Pancreas (tissue), 10 donors: ENCODE measurements at regions of chr16 and their contacts with region 1.

Region 1: GRCh38 chr16:8567750-8568617 is 22.3 kb downstream of the TMEM114 start:
- DNase-seq: peak; percentile 69 to 85 (median 74)
- ATAC-seq: peak; percentile 83 to 96 (median 94)
- H3K4me3 ChIP-seq: no peak overlapping the region
- H3K27ac ChIP-seq: no peak overlapping the region
- H3K4me1 ChIP-seq: no peaks in the 10 kb centered on the region
- H3K27me3 ChIP-seq: no peaks in the 10 kb centered on the region
- CTCF ChIP-seq: peak; percentile 95 to 99 (median 96)

Region 2: DNA sequence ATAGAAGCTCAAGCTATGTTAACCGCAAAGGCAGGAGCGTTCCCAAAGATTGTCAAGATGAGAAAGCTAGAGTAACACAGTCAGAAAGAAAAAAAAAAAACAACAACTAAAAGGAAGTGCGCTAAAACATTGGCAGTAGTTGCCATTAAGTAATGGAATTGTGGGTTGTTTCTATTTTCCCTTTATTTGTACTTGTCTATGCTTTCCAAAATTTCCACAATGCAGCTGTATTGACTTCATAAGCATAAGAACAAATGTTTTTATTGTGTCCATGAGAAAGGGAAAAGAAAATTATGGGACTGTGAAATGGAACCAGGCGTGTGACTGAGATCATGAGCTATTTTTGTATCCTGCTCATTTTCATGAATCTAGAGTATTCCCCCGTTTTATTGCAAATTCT is 131.1 kb before region 1 on chr16:
- intact Hi-C with region 1: no loop called
- DNase-seq: no peak
- ATAC-seq: no peak
- H3K4me3 ChIP-seq: no peak overlapping the region
- H3K27ac ChIP-seq: no peak overlapping the region
- H3K4me1 ChIP-seq: no peaks in the 10 kb centered on the region
- H3K27me3 ChIP-seq: no peaks in the 10 kb centered on the region
- CTCF ChIP-seq: no peak

Region 3: DNA sequence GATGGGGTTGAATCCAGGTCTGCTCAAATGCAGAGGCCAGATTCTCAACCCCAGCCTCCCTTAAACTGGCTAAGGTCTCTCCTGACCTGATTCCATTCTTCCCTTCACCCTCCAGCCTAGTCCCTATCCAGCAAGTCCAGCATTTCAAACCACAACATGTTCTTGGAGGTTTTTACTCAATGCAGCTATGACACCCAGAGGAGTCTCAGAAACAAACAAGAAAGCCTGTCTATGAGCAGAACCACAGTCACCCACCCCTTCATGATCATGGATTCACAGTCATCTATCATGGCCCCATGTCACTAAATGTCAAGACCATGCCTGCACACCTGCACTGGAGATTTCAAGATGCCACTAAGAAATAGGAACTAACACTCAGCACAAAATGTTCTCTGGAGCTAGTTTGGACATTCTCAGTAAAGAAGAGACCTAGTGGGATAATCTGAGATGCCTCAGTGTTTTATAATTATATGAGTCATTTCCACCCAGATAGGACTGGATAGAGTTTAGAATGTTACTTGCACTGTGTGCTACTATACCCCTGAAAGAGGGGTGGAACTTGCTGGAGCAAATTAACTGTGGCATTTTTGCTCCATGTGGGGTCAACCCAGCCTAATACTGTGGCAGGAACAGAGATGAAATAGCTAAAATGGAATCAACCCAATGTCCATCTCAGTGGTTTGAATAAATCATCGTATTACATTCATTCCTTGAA is 44.1 kb after region 1 on chr16:
- intact Hi-C with region 1: loop called in 1 of 3 experiments (anchors 10 kb)
- DNase-seq: no peak
- ATAC-seq: no peak
- H3K4me3 ChIP-seq: no peak overlapping the region
- H3K27ac ChIP-seq: no peak overlapping the region
- H3K4me1 ChIP-seq: no peaks in the 10 kb centered on the region
- H3K27me3 ChIP-seq: no peaks in the 10 kb centered on the region
- CTCF ChIP-seq: no peak

Region 4: GRCh38 chr16:8788578-8789172 is 220.7 kb after region 1 on chr16:
- intact Hi-C with region 1: loop called in 1 of 3 experiments (anchors 10 kb)
- DNase-seq: no peak
- ATAC-seq: no peak
- H3K4me3 ChIP-seq: no peak overlapping the region
- H3K27ac ChIP-seq: no peak overlapping the region
- H3K4me1 ChIP-seq: no peaks in the 10 kb centered on the region
- H3K27me3 ChIP-seq: no peaks in the 10 kb centered on the region
- CTCF ChIP-seq: no peak

Region 5: DNA sequence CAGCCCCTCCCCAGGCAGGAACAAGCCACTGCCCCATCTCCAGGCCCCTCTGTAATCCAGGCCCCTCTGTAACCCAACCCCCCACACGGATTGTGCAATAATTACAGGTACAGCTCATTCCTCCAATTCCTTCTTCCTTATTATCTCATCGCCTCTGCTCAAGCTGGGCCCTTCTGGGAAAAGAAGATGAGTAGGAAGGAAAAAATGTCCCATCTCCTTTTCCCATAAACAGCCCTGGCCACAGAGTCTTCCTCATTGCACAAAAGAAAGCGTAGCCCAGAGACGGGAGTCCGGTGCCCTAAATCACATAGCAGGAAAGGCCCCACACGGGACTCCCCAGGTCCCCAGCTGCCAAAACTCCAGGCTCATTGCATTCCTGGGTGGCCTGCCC is 310.5 kb after region 1 on chr16:
- intact Hi-C with region 1: loop called in 2 of 3 experiments (anchors 5 kb)
- DNase-seq: peak in 1 of 6 donors; percentile 26
- ATAC-seq: peak in 3 of 4 donors; percentile 7 to 54 (median 43)
- H3K4me3 ChIP-seq: no peak overlapping the region
- H3K27ac ChIP-seq: peak overlapping the region in 2 of 4 donors; percentile 35 to 46
- H3K4me1 ChIP-seq: peaks cover 0 to 5% (median 0%) of the 10 kb centered on the region in 3 donors
- H3K27me3 ChIP-seq: no peaks in the 10 kb centered on the region
- CTCF ChIP-seq: no peak